Activated CD4-positive, alpha-beta T cell treated with anti-CD3 and anti-CD28 coated beads for 36 hours (primary cell): ENCODE measurements at regions of chrX and their contacts with region 1.

Region 1: GRCh38 chrX:129823115-129823514 is 20.6 kb downstream of the ZDHHC9 start:
- DNase-seq: peak; percentile 65
- ATAC-seq: peak; percentile 87
- H3K4me3 Mint-ChIP-seq: no peak overlapping the region
- H3K27ac Mint-ChIP-seq: peak overlapping the region; percentile 81
- H3K4me1 Mint-ChIP-seq: peaks cover 16% of the 10 kb centered on the region
- H3K27me3 Mint-ChIP-seq: no peaks in the 10 kb centered on the region

Region 2: GRCh38 chrX:129637217-129638109 is 185.7 kb before region 1 on chrX:
- CTCF ChIA-PET with region 1: interaction called, 5 read pairs
- POLR2A ChIA-PET with region 1: interaction called, 3 read pairs
- intact Hi-C with region 1: loop called (anchors 1 kb)
- DNase-seq: peak; percentile 85
- ATAC-seq: peak; percentile 76
- H3K4me3 Mint-ChIP-seq: no peak overlapping the region
- H3K27ac Mint-ChIP-seq: no peak overlapping the region
- H3K4me1 Mint-ChIP-seq: no peaks in the 10 kb centered on the region
- H3K27me3 Mint-ChIP-seq: no peaks in the 10 kb centered on the region

Region 3: GRCh38 chrX:129654419-129655165 is 168.5 kb before region 1 on chrX and contains the start of gene APLN:
- CTCF ChIA-PET with region 1: interaction called, 3 read pairs
- POLR2A ChIA-PET with region 1: interaction called, 3 read pairs
- intact Hi-C with region 1: loop called in 1 of 2 experiments (anchors 5 kb)
- DNase-seq: peak; percentile 38
- ATAC-seq: peak; percentile 70
- H3K4me3 Mint-ChIP-seq: peak within 1 kb of the TSS; percentile 63
- H3K27ac Mint-ChIP-seq: no peak within 1 kb of the TSS
- H3K4me1 Mint-ChIP-seq: peaks cover 9% of the 10 kb centered on the region
- H3K27me3 Mint-ChIP-seq: peaks cover 10% of the 10 kb centered on the region
- total RNA-seq, gene APLN: 1.9 to 2.1 TPM

Region 4: GRCh38 chrX:129754056-129755024 is 68.8 kb before region 1 on chrX:
- CTCF ChIA-PET with region 1: interaction called, 6 read pairs
- POLR2A ChIA-PET with region 1: no interaction called
- intact Hi-C with region 1: loop called (anchors 1 kb)
- DNase-seq: peak; percentile 36
- ATAC-seq: no peak
- H3K4me3 Mint-ChIP-seq: no peak overlapping the region
- H3K27ac Mint-ChIP-seq: peak overlapping the region; percentile 65
- H3K4me1 Mint-ChIP-seq: peaks cover 45% of the 10 kb centered on the region
- H3K27me3 Mint-ChIP-seq: no peaks in the 10 kb centered on the region